GM12878 (cell line): ENCODE measurements at regions of chr15 and their contacts with region 1.

Region 1: DNA sequence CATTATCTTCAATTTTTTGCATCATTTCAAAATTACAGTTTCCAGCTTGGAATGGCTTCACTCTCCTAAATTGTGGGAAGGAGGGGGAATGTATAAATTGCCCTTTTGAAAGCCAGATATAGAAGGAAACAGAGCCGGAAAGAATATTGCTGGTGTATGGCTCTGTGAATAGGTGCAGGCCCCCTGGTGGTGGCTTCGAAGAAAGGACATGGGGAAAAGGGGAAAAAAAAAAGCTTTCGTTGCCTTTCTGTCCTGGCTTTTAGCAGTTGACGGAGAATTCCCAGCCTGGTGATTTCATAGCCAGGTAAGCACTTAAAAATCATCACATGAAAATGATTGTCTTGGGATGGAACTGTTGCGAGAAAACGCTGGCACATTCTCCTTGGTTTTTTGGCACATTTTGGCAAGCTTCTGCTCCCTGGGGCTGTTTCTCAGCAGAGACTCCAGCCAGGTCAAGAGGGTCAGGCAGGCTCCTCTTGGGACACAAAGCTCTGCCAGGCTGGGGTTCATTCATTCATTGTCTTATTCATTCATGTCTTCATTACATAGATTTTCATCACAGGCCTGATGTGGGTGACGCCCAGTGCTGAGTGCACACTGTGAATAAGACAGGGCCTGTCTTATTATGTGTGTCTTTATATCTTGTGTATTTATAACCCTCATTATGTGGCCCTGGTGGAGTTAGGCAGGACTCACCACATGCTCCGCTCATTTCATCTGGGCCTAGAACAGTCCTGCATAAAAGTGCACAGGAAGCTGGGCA is 300.0 kb upstream of the TPM1 start:
- DNase-seq: no peak
- ATAC-seq: peak; percentile 87
- H3K4me3 ChIP-seq: no peak overlapping the region
- H3K27ac ChIP-seq: no peak overlapping the region
- H3K4me1 ChIP-seq: no peaks in the 10 kb centered on the region
- H3K27me3 ChIP-seq: peaks cover 0 to 2% of the 10 kb centered on the region in 2 experiments; a peak in 2 of 4 replicates
- CTCF ChIP-seq: peak; percentile 69 to 87 (median 85)
- EP300 ChIP-seq: no peak
- POLR2A ChIP-seq: no peak
- RAD21 ChIP-seq: peak; percentile 60

Region 2: GRCh38 chr15:62665449-62665848 is 77.1 kb before region 1 on chr15:
- CTCF ChIA-PET with region 1: no interaction called
- POLR2A ChIA-PET with region 1: no interaction called
- RAD21 ChIA-PET with region 1: no interaction called
- SMC1A ChIA-PET with region 1: no interaction called
- in situ Hi-C with region 1: no loop called
- intact Hi-C with region 1: no loop called
- DNase-seq: no peak
- ATAC-seq: no peak
- H3K4me3 ChIP-seq: no peak overlapping the region
- H3K27ac ChIP-seq: no peak overlapping the region
- H3K4me1 ChIP-seq: no peaks in the 10 kb centered on the region
- H3K27me3 ChIP-seq: no peaks in the 10 kb centered on the region
- CTCF ChIP-seq: no peak
- EP300 ChIP-seq: no peak
- POLR2A ChIP-seq: no peak
- RAD21 ChIP-seq: no peak

Region 3: DNA sequence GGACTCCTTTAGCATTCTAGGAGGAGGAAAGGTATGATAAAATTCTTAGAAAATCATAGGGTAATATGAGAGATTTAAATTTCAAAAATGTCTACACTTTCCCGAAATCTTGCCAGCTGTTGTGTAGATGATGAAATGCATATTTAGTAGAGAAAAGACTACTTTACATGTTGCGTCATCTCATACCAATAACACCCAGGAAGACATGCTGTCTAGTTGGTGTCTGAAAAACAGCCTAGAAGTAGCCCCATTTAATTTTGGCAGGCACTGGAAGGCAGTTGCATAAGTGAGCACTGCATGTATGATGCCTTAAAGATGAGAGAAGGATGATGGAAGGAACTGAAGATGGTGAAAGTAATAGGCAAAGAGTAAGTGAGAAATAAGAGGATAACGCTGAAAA is 10.5 kb before region 1 on chr15:
- CTCF ChIA-PET with region 1: interaction called, 10 read pairs
- POLR2A ChIA-PET with region 1: no interaction called
- RAD21 ChIA-PET with region 1: no interaction called
- SMC1A ChIA-PET with region 1: interaction called, 3 read pairs
- in situ Hi-C with region 1: no loop called
- intact Hi-C with region 1: no loop called
- DNase-seq: no peak
- ATAC-seq: no peak
- H3K4me3 ChIP-seq: no peak overlapping the region
- H3K27ac ChIP-seq: no peak overlapping the region
- H3K4me1 ChIP-seq: no peaks in the 10 kb centered on the region
- H3K27me3 ChIP-seq: no peaks in the 10 kb centered on the region
- CTCF ChIP-seq: no peak
- EP300 ChIP-seq: no peak
- POLR2A ChIP-seq: no peak
- RAD21 ChIP-seq: no peak

Region 4: GRCh38 chr15:62756326-62756994 is 13.9 kb after region 1 on chr15:
- CTCF ChIA-PET with region 1: interaction called, 13 read pairs
- POLR2A ChIA-PET with region 1: no interaction called
- RAD21 ChIA-PET with region 1: no interaction called
- SMC1A ChIA-PET with region 1: interaction called, 9 read pairs
- in situ Hi-C with region 1: no loop called
- intact Hi-C with region 1: no loop called
- DNase-seq: no peak
- ATAC-seq: no peak
- H3K4me3 ChIP-seq: no peak overlapping the region
- H3K27ac ChIP-seq: no peak overlapping the region
- H3K4me1 ChIP-seq: no peaks in the 10 kb centered on the region
- H3K27me3 ChIP-seq: peaks cover 0 to 3% of the 10 kb centered on the region in 2 experiments; a peak in 1 of 4 replicates
- CTCF ChIP-seq: no peak
- EP300 ChIP-seq: no peak
- POLR2A ChIP-seq: no peak
- RAD21 ChIP-seq: no peak